Activated CD8-positive, alpha-beta T cell treated with anti-CD3 and anti-CD28 coated beads for 36 hours (primary cell): ENCODE measurements at regions of chr13 and their contacts with region 1.

Region 1: DNA sequence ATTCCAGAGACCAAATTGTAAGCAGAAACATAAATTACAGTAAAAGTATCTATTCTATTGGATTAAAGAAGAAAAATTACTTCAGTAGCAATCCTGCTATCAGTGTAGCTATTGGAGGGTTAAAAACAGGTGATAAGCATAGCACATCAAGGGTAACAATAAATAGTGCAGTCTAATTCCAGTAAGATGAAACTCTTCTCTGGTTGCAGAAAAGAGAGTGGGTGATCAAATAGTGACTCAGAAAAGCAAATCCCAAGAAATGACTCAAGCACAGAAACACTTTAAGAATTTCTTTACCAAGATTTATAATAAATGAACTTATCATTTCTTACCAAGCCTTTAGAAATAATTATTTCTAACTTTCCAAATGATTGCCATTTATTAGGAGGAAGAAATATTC is 135.7 kb downstream of the LMO7 start:
- DNase-seq: no peak
- ATAC-seq: peak; percentile 95
- H3K4me3 Mint-ChIP-seq: no peak overlapping the region
- H3K27ac Mint-ChIP-seq: no peak overlapping the region
- H3K4me1 Mint-ChIP-seq: peaks cover 46% of the 10 kb centered on the region
- H3K27me3 Mint-ChIP-seq: no peaks in the 10 kb centered on the region
- CTCF ChIP-seq: no peak

Region 2: GRCh38 chr13:75530536-75530935 is 241.3 kb before region 1 on chr13:
- CTCF ChIA-PET with region 1: no interaction called
- POLR2A ChIA-PET with region 1: no interaction called
- intact Hi-C with region 1: loop called (anchors 5 kb)
- DNase-seq: no peak
- ATAC-seq: peak; percentile 90
- H3K4me3 Mint-ChIP-seq: no peak overlapping the region
- H3K27ac Mint-ChIP-seq: peak overlapping the region; percentile 53
- H3K4me1 Mint-ChIP-seq: peaks cover 47% of the 10 kb centered on the region
- H3K27me3 Mint-ChIP-seq: no peaks in the 10 kb centered on the region
- CTCF ChIP-seq: no peak

Region 3: GRCh38 chr13:75752826-75753225 is 19.0 kb before region 1 on chr13:
- CTCF ChIA-PET with region 1: no interaction called
- POLR2A ChIA-PET with region 1: no interaction called
- intact Hi-C with region 1: no loop called
- DNase-seq: no peak
- ATAC-seq: no peak
- H3K4me3 Mint-ChIP-seq: no peak overlapping the region
- H3K27ac Mint-ChIP-seq: no peak overlapping the region
- H3K4me1 Mint-ChIP-seq: peaks cover 23% of the 10 kb centered on the region
- H3K27me3 Mint-ChIP-seq: no peaks in the 10 kb centered on the region
- CTCF ChIP-seq: no peak